Natural killer cell (primary cell): ENCODE measurements at regions of chr11 and their contacts with region 1.

Region 1: GRCh38 chr11:6531267-6531752 is 34.2 kb downstream of the DNHD1 start:
- DNase-seq: peak in 1 of 2 donors; percentile 72
- ATAC-seq: peak; percentile 69 to 86 (median 76)
- H3K4me3 ChIP-seq: no peak overlapping the region
- H3K4me3 Mint-ChIP-seq: no peak overlapping the region
- H3K27ac ChIP-seq: no peak overlapping the region
- H3K27ac Mint-ChIP-seq: no peak overlapping the region
- H3K4me1 ChIP-seq: no peaks in the 10 kb centered on the region
- H3K4me1 Mint-ChIP-seq: peaks cover 7% of the 10 kb centered on the region in 2 donors
- H3K27me3 ChIP-seq: no peaks in the 10 kb centered on the region
- H3K27me3 Mint-ChIP-seq: no peaks in the 10 kb centered on the region
- CTCF ChIP-seq: peak; percentile 77

Region 2: GRCh38 chr11:6619004-6619745 is 87.9 kb after region 1 on chr11 and contains the start of gene TPP1:
- intact Hi-C with region 1: no loop called
- DNase-seq: peak; percentile 89 to 95
- ATAC-seq: peak; percentile 89 to 97 (median 96)
- H3K4me3 ChIP-seq: peak within 1 kb of the TSS; percentile 72
- H3K4me3 Mint-ChIP-seq: no peak within 1 kb of the TSS
- H3K27ac ChIP-seq: peak within 1 kb of the TSS; percentile 89
- H3K27ac Mint-ChIP-seq: no peak within 1 kb of the TSS
- H3K4me1 ChIP-seq: peaks cover 26% of the 10 kb centered on the region
- H3K4me1 Mint-ChIP-seq: peaks cover 0 to 8% of the 10 kb centered on the region in 2 donors
- H3K27me3 ChIP-seq: no peaks in the 10 kb centered on the region
- H3K27me3 Mint-ChIP-seq: no peaks in the 10 kb centered on the region
- CTCF ChIP-seq: no peak
- total RNA-seq, gene TPP1: 123 to 135 (median 131) TPM

Region 3: DNA sequence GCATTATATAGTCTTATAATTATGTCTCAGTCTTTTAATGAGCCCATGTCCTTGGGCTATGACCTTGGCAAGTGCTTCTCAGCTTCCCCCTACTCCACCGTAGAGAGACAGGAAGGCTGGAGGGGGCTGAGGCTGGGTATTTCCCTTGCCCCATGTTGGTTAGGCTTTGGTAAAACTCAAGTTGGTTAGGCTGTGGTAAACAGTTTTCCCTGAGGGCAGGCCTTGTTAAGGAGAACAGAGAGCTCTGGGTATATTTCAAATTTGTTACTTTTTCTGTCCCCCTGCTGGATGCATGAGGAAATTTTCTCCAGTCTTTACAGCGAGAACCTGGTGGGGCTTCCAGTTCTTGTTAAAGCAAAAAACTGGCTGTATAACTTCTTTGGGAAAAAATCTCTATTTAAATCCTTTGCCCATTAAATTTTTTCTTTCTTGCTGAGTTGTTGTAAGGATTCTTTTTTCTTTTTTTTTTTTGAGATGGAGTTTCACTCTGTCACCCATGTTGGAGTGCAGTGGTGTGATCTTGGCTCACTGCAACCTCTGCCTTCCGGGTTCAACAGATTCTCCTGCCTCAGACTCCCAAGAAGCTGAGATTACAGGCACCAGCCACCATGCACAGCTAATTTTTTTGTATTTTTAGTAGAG is 136.5 kb after region 1 on chr11:
- intact Hi-C with region 1: loop called (anchors 5 kb)
- DNase-seq: peak in 1 of 2 donors; percentile 78
- ATAC-seq: peak; percentile 66 to 94 (median 86)
- H3K4me3 ChIP-seq: no peak overlapping the region
- H3K4me3 Mint-ChIP-seq: no peak overlapping the region
- H3K27ac ChIP-seq: peak overlapping the region; percentile 35
- H3K27ac Mint-ChIP-seq: peak overlapping the region; percentile 65 to 78
- H3K4me1 ChIP-seq: peaks cover 10% of the 10 kb centered on the region
- H3K4me1 Mint-ChIP-seq: peaks cover 10 to 14% of the 10 kb centered on the region in 2 donors
- H3K27me3 ChIP-seq: no peaks in the 10 kb centered on the region
- H3K27me3 Mint-ChIP-seq: peaks cover 0 to 3% of the 10 kb centered on the region in 2 donors
- CTCF ChIP-seq: peak; percentile 66

Region 4: DNA sequence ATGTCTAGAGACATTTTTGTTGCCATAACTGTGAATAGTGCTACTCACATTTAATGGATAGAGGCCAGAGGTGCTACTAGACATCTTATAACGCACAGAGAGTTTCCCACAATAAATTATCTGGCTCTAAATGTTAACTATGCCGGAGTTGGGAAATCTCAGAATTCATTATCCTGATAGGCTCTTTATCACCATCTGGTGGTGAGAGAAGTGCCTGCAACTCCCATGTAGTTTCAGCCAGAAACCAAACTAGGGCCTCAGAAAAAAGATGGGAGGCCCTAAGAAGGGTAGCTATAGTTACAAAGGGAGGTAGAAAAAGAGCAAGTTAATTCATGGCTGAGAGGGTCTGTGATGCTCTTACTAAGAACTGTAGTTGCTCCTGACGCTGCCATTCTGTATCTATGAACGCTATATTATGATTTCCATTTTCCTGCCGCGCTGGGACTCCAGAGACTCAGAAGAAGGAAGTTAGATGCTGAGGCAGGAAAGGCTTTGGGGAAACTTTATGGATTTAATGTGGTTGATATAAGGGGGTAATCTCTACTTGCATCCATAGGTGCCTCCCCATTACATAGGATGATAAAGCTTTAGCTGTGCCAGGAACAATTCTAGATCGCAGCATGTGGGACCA is 174.7 kb after region 1 on chr11:
- intact Hi-C with region 1: loop called (anchors 1 kb)
- DNase-seq: peak in 1 of 2 donors; percentile 73
- ATAC-seq: peak; percentile 58 to 82 (median 65)
- H3K4me3 ChIP-seq: no peak overlapping the region
- H3K4me3 Mint-ChIP-seq: no peak overlapping the region
- H3K27ac ChIP-seq: peak overlapping the region; percentile 26
- H3K27ac Mint-ChIP-seq: peak overlapping the region; percentile 47 to 84
- H3K4me1 ChIP-seq: no peaks in the 10 kb centered on the region
- H3K4me1 Mint-ChIP-seq: peaks cover 24 to 29% of the 10 kb centered on the region in 2 donors
- H3K27me3 ChIP-seq: no peaks in the 10 kb centered on the region
- H3K27me3 Mint-ChIP-seq: no peaks in the 10 kb centered on the region
- CTCF ChIP-seq: peak; percentile 87